ENCODE measurements at regions of chr7 and their contacts with region 1.

Region 1: DNA sequence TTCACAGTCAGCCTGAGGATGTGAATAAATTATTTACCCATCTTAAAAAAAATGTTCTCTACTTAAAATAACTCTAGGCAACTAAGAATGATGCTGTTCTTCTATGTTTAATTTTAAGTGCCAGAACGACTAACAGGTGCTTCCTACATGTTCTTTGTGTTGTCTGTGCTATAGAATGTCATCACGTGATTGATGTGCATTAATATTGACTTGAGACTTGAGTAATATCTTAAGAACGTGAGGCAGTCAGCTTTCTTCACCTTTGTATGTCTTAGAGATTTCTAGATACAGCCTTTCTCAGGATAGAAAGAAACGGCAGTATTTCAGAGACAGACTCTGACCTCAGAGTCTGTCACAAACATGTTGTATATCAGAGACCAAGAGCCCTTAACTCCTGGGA is 274.6 kb downstream of the KCND2 start:
- DNase-seq: no peak
- H3K4me3 Mint-ChIP-seq: no peak overlapping the region
- H3K27ac Mint-ChIP-seq: no peak overlapping the region
- H3K4me1 Mint-ChIP-seq: peaks cover 9% of the 10 kb centered on the region
- H3K27me3 Mint-ChIP-seq: no peaks in the 10 kb centered on the region
- CTCF ChIP-seq: no peak

Region 2: GRCh38 chr7:120337308-120337907 is 210.2 kb before region 1 on chr7:
- CTCF ChIA-PET with region 1: no interaction called
- intact Hi-C with region 1: loop called (anchors 5 kb)
- DNase-seq: peak; percentile 18
- H3K4me3 Mint-ChIP-seq: no peak overlapping the region
- H3K27ac Mint-ChIP-seq: no peak overlapping the region
- H3K4me1 Mint-ChIP-seq: no peaks in the 10 kb centered on the region
- H3K27me3 Mint-ChIP-seq: no peaks in the 10 kb centered on the region
- CTCF ChIP-seq: peak; percentile 37